Activated T-helper 1 cell treated with anti-CD3 and anti-CD28 coated beads, Interleukin-12 subunit alpha, Interleukin-12 subunit beta, Interleukin-2, Interleukin-4 antibody, amounts not matched to agents 30 ng/mL and 10 ng/mL and 1 ng/mL, durations not matched to agents 14 hours and 24 hours and 36 hours (primary cell): ENCODE measurements at regions of chr10 and their contacts with region 1.

Region 1: GRCh38 chr10:29735596-29736318 is 101.0 kb upstream of the SVIL start:
- DNase-seq: peak; percentile 79
- H3K4me3 Mint-ChIP-seq: peak overlapping the region; percentile 80
- H3K27ac Mint-ChIP-seq: peak overlapping the region; percentile 67
- H3K4me1 Mint-ChIP-seq: peaks cover 10% of the 10 kb centered on the region
- H3K27me3 Mint-ChIP-seq: peaks cover 45% of the 10 kb centered on the region

Region 2: DNA sequence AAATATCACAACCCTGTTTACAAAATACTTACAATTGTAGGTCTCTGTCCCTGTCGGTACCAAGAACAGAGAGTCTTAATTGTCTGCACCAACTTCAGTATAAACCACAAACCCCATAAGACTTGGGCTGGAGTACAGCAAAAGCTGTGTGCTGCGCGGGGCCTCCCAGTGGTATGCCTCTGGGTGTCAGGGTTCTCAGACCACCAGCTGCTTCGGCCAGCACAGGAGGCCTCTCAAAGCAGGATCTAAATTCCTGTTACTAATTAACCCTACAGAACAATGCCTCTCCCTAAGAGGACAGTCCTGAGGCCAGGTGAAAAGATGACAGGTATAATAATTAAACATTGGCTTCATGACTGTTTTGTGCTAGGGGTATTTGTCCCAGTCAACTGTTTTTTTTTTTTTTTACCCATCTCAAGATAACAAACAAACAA is 100.0 kb before region 1 on chr10:
- intact Hi-C with region 1: loop called (anchors 2 kb)
- DNase-seq: no peak
- H3K4me3 Mint-ChIP-seq: no peak overlapping the region
- H3K27ac Mint-ChIP-seq: no peak overlapping the region
- H3K4me1 Mint-ChIP-seq: peaks cover 32% of the 10 kb centered on the region
- H3K27me3 Mint-ChIP-seq: peaks cover 2% of the 10 kb centered on the region

Region 3: GRCh38 chr10:29689001-29689400 is 46.8 kb before region 1 on chr10:
- intact Hi-C with region 1: loop called (anchors 1 kb)
- DNase-seq: no peak
- H3K4me3 Mint-ChIP-seq: no peak overlapping the region
- H3K27ac Mint-ChIP-seq: no peak overlapping the region
- H3K4me1 Mint-ChIP-seq: peaks cover 12% of the 10 kb centered on the region
- H3K27me3 Mint-ChIP-seq: peaks cover 5% of the 10 kb centered on the region

Region 4: GRCh38 chr10:29811751-29812449 is 76.1 kb after region 1 on chr10:
- intact Hi-C with region 1: loop called (anchors 5 kb)
- DNase-seq: peak; percentile 49
- H3K4me3 Mint-ChIP-seq: peak overlapping the region; percentile 34
- H3K27ac Mint-ChIP-seq: peak overlapping the region; percentile 36
- H3K4me1 Mint-ChIP-seq: peaks cover 32% of the 10 kb centered on the region
- H3K27me3 Mint-ChIP-seq: peaks cover 20% of the 10 kb centered on the region